ENCODE measurements at regions of chr10 and their contacts with region 1.

Region 1: GRCh38 chr10:8138471-8138870 is 84.0 kb downstream of the GATA3 start:
- DNase-seq: no peak
- H3K4me3 Mint-ChIP-seq: peak overlapping the region; percentile 15
- H3K27ac Mint-ChIP-seq: peak overlapping the region; percentile 56
- H3K4me1 Mint-ChIP-seq: peaks cover 57% of the 10 kb centered on the region
- H3K27me3 Mint-ChIP-seq: no peaks in the 10 kb centered on the region

Region 2: DNA sequence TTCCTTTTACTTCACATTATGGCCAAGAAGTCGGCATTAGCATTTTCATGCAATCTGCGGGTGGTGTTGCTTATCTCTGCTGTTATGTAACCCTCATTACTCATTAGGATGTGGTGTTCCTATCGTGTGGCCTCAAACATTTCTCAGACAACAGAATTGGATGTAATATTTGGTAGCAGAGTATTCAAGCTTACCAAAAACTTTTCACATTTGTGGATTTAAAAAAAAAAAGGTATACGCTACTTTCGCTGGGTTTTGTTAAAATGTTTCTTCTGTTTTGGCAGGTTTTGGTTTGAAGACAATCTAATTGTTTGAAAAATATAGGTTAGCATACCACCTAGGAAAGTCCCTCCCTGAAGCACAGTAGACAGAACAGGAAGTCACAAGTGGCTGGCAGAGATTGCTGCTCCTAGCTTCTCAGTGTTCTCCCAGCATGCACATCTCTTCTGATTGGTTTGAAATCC is 44.8 kb after region 1 on chr10:
- intact Hi-C with region 1: loop called (anchors 2 kb)
- DNase-seq: peak; percentile 27
- H3K4me3 Mint-ChIP-seq: peak overlapping the region; percentile 27
- H3K27ac Mint-ChIP-seq: peak overlapping the region; percentile 13
- H3K4me1 Mint-ChIP-seq: peaks cover 23% of the 10 kb centered on the region
- H3K27me3 Mint-ChIP-seq: peaks cover 11% of the 10 kb centered on the region

Region 3: GRCh38 chr10:8312781-8313180 is 174.3 kb after region 1 on chr10:
- intact Hi-C with region 1: loop called (anchors 1 kb)
- DNase-seq: no peak
- H3K4me3 Mint-ChIP-seq: no peak overlapping the region
- H3K27ac Mint-ChIP-seq: peak overlapping the region; percentile 67
- H3K4me1 Mint-ChIP-seq: peaks cover 53% of the 10 kb centered on the region
- H3K27me3 Mint-ChIP-seq: no peaks in the 10 kb centered on the region

Region 4: GRCh38 chr10:8473205-8473604 is 334.7 kb after region 1 on chr10:
- intact Hi-C with region 1: loop called (anchors 1 kb)
- DNase-seq: peak; percentile 5
- H3K4me3 Mint-ChIP-seq: no peak overlapping the region
- H3K27ac Mint-ChIP-seq: no peak overlapping the region
- H3K4me1 Mint-ChIP-seq: peaks cover 8% of the 10 kb centered on the region
- H3K27me3 Mint-ChIP-seq: peaks cover 33% of the 10 kb centered on the region

Region 5: DNA sequence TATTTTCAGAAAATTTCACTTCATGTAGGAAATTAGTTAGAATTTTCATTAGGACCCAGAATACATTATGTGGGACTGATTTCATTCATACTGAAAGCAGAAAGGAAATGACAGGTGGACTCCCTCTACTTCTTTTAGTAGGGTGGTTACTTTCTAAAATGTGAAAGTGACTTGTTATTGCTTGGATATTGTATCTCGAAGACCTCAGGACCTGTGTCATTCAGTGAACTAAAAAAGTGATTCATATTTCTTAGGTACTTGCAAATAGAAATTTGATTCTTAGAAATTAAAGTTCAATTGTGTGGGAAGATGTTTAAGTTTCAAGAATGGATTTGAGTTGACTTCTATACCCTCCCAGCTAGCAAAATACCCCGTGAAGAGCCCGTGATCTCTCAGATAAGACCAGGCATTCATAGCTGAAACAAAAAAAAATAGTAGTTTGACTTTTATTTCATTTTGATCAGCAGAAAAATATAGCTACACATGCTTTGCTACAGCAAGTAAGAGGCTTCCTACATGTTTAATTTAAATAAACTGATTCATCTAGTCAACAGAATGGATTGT is 953.1 kb after region 1 on chr10:
- intact Hi-C with region 1: loop called (anchors 2 kb)
- DNase-seq: no peak
- H3K4me3 Mint-ChIP-seq: no peak overlapping the region
- H3K27ac Mint-ChIP-seq: no peak overlapping the region
- H3K4me1 Mint-ChIP-seq: peaks cover 11% of the 10 kb centered on the region
- H3K27me3 Mint-ChIP-seq: peaks cover 4% of the 10 kb centered on the region